WTC11 (cell line): ENCODE measurements at regions of chr16 and their contacts with region 1.

Region 1: DNA sequence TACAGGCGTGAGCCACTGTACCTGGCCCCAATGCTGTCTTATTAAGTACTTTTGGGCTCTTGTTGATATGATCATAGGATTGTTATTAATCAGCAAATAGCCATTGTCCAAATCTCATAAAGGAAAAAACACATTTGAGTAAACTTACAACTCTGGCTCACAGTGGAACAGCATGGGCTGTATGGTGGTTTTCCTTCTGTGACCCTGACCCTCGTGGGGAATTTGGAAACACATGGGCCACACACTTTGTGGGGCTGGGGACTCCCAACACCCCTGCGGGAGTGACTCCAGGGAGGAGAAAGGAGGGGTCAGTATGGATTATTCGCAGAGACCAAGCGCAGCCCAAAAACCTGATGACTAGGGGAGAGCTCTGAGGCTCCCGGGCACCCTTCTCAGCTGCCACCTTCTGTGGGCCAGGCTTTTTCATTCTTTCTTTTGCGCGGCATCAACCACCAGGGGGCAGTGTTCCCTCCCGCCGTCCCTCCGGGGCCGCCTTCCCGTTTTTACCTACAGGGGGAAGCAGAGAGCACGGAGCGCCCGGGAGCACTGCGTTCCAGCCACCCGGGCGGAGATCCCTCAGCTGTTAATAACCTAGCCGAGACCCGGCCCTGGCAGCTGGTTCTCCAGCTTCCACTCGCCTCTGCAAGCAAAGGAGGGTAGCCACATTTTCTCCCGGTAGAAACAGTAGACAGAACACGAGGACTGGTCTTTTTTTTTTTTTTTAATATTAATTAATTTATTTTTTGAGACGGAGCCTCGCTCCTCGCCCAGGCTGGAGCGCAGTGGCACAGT is 9.7 kb downstream of the TSNAXIP1 start:
- DNase-seq: peak; percentile 87
- ATAC-seq: peak; percentile 93
- H3K4me3 Mint-ChIP-seq: no peak overlapping the region
- H3K27ac Mint-ChIP-seq: no peak overlapping the region
- H3K4me1 Mint-ChIP-seq: no peaks in the 10 kb centered on the region
- H3K27me3 Mint-ChIP-seq: no peaks in the 10 kb centered on the region
- CTCF ChIP-seq: peak; percentile 100

Region 2: GRCh38 chr16:67571981-67572431 is 244.4 kb before region 1 on chr16:
- CTCF ChIA-PET with region 1: no interaction called
- POLR2A ChIA-PET with region 1: no interaction called
- DNase-seq: no peak
- ATAC-seq: no peak
- H3K4me3 Mint-ChIP-seq: no peak overlapping the region
- H3K27ac Mint-ChIP-seq: no peak overlapping the region
- H3K4me1 Mint-ChIP-seq: peaks cover 3% of the 10 kb centered on the region; the same call in 1 of the 2 replicates
- H3K27me3 Mint-ChIP-seq: no peaks in the 10 kb centered on the region
- CTCF ChIP-seq: no peak

Region 3: GRCh38 chr16:67660564-67661028 is 155.8 kb before region 1 on chr16 and contains the start of gene PARD6A:
- CTCF ChIA-PET with region 1: interaction called, 25 read pairs
- POLR2A ChIA-PET with region 1: no interaction called
- DNase-seq: peak; percentile 96
- ATAC-seq: peak; percentile 72
- H3K4me3 Mint-ChIP-seq: peak within 1 kb of the TSS; percentile 91
- H3K27ac Mint-ChIP-seq: peak within 1 kb of the TSS; percentile 98
- H3K4me1 Mint-ChIP-seq: peaks cover 19% of the 10 kb centered on the region
- H3K27me3 Mint-ChIP-seq: peaks cover 5% of the 10 kb centered on the region
- CTCF ChIP-seq: no peak
- total RNA-seq, gene PARD6A: 17.1 to 18.5 TPM (median 17.4 TPM) in 3 replicates

Region 4: GRCh38 chr16:67767953-67768352 is 48.5 kb before region 1 on chr16:
- CTCF ChIA-PET with region 1: interaction called, 11 read pairs
- POLR2A ChIA-PET with region 1: no interaction called
- DNase-seq: no peak
- ATAC-seq: no peak
- H3K4me3 Mint-ChIP-seq: no peak overlapping the region
- H3K27ac Mint-ChIP-seq: no peak overlapping the region
- H3K4me1 Mint-ChIP-seq: no peaks in the 10 kb centered on the region
- H3K27me3 Mint-ChIP-seq: no peaks in the 10 kb centered on the region
- CTCF ChIP-seq: no peak

Region 5: GRCh38 chr16:67800338-67800926 is 16.0 kb before region 1 on chr16:
- CTCF ChIA-PET with region 1: interaction called, 19 read pairs
- POLR2A ChIA-PET with region 1: interaction called, 3 read pairs
- DNase-seq: no peak
- ATAC-seq: no peak
- H3K4me3 Mint-ChIP-seq: no peak overlapping the region
- H3K27ac Mint-ChIP-seq: no peak overlapping the region; the same call in 1 of the 2 replicates
- H3K4me1 Mint-ChIP-seq: peaks cover 3% of the 10 kb centered on the region
- H3K27me3 Mint-ChIP-seq: no peaks in the 10 kb centered on the region
- CTCF ChIP-seq: no peak

Region 6: GRCh38 chr16:67857502-67858233 is 41.2 kb after region 1 on chr16:
- CTCF ChIA-PET with region 1: interaction called, 14 read pairs
- POLR2A ChIA-PET with region 1: no interaction called
- DNase-seq: peak; percentile 51
- ATAC-seq: peak; percentile 93
- H3K4me3 Mint-ChIP-seq: peak overlapping the region; percentile 24; the same call in 1 of the 2 replicates
- H3K27ac Mint-ChIP-seq: peak overlapping the region; percentile 85
- H3K4me1 Mint-ChIP-seq: peaks cover 34% of the 10 kb centered on the region
- H3K27me3 Mint-ChIP-seq: no peaks in the 10 kb centered on the region
- CTCF ChIP-seq: no peak

Region 7: DNA sequence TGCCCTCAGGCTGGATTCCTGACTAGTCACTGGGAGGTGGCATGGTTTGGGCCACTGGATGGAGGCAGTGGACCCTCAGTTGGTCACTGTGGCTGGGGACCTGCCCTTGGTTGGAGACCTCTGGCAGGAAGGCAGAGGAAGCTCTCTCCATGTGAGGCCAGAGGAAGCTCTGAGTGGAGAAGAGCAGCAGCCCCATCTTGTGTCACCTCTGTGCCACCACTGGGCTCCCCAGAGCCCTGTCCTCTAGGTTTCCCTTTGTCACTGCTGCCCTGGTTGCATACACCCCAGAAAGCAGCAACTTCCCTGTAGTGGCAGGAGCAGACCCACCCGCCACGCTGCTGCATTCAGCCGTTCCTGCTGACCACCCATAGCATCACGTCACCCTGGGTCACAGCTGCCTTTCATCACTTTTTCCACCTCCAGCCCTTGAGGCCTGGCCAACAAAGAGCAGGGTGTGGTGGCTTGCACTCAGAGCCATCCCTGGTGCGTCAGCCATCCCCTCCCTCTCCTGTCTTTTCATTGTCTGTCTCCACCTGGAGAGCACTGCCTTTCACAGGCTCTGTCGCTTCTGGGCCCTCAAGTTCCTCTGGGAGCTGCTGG is 103.3 kb after region 1 on chr16:
- CTCF ChIA-PET with region 1: interaction called, 22 read pairs
- POLR2A ChIA-PET with region 1: no interaction called
- DNase-seq: no peak
- ATAC-seq: peak; percentile 8; the same call in 1 of the 2 replicates
- H3K4me3 Mint-ChIP-seq: no peak overlapping the region
- H3K27ac Mint-ChIP-seq: no peak overlapping the region
- H3K4me1 Mint-ChIP-seq: peaks cover 36% of the 10 kb centered on the region
- H3K27me3 Mint-ChIP-seq: no peaks in the 10 kb centered on the region; the same call in 1 of the 2 replicates
- CTCF ChIP-seq: no peak

Region 8: DNA sequence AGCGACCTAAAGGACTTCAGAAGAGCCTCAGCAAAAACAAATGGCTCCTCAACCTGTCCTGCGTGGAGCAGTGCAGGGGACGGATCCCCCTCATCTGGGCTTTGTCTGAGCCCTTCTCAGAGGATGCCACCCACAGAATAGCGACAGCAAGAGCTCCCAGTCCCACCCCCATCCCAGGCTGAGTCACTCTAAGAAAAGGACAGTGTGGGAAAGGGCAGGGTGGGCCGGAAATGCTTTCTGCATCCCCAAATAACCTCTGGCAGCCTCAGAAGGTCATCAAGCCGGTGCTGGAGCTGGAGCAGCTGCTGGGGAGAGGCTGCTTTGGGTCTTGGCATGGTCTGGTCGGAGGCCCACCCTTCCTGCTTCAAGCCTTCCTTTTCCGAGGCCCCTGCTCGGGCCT is 143.1 kb after region 1 on chr16:
- CTCF ChIA-PET with region 1: no interaction called
- POLR2A ChIA-PET with region 1: no interaction called
- DNase-seq: no peak
- ATAC-seq: no peak
- H3K4me3 Mint-ChIP-seq: no peak overlapping the region
- H3K27ac Mint-ChIP-seq: no peak overlapping the region
- H3K4me1 Mint-ChIP-seq: peaks cover 5% of the 10 kb centered on the region
- H3K27me3 Mint-ChIP-seq: no peaks in the 10 kb centered on the region
- CTCF ChIP-seq: no peak

Region 9: DNA sequence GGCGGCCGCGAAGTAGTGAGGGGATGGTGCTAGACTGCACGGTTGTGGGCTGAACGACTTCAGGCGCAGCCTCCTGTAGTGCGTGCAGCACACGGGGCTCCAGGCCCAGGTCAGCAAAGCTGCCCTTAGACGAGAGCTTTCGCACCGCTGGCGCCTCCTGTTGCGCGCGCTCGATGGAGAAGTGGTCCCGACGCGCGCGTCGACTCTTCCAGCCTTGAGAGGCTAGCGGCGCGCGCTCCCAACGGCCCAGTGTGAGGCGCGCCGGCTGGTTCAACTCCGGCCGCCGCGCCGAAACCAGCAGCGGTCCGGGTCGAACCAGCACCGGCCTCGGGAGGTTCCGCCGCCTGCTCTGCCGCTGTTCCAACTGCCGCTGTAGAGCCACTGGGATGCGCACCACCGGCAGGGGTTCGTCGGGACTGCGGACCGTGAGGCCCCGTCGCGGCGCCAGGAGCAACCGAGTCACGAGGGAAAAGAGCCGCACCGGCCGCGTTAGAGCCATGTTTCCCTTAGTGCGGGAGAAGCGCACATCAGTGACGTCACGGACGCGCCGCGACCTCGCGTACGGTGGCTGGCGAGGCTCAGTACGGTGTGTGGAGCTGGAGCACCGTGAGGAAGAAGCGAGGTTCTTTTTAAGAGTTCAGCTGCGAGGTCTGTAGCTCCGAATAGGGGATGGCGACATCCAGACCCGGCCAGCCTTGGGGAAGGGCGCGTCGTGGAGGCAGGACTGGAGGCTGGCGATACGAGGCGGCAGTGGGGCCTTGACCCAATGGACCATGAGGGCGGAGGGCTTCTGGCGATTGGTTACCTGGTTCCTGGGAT is 206.5 kb after region 1 on chr16 and contains the starts of genes DDX28 and DUS2:
- CTCF ChIA-PET with region 1: interaction called, 11 read pairs
- POLR2A ChIA-PET with region 1: no interaction called
- DNase-seq: peak; percentile 92
- ATAC-seq: peak; percentile 67
- H3K4me3 Mint-ChIP-seq: peak within 1 kb of the TSS; percentile 100
- H3K27ac Mint-ChIP-seq: peak within 1 kb of the TSS; percentile 100
- H3K4me1 Mint-ChIP-seq: peaks cover 15% of the 10 kb centered on the region
- H3K27me3 Mint-ChIP-seq: no peaks in the 10 kb centered on the region; the same call in 1 of the 2 replicates
- CTCF ChIP-seq: no peak
- total RNA-seq, gene DDX28: 15.2 to 18.3 TPM (median 17.7 TPM) in 3 replicates
- total RNA-seq, gene DUS2: 23.5 to 27.9 TPM (median 25.8 TPM) in 3 replicates